CD4-positive, alpha-beta T cell (primary cell): ENCODE measurements at regions of chr11 and their contacts with region 1.

Region 1: GRCh38 chr11:8099291-8099899 is 18.4 kb downstream of the TUB start:
- DNase-seq: peak; percentile 44 to 79 (median 68)
- ATAC-seq: peak; percentile 52
- H3K4me3 ChIP-seq: no peak overlapping the region
- H3K4me3 Mint-ChIP-seq: no peak overlapping the region
- H3K27ac ChIP-seq: no peak overlapping the region
- H3K27ac Mint-ChIP-seq: no peak overlapping the region
- H3K4me1 ChIP-seq: no peaks in the 10 kb centered on the region
- H3K4me1 Mint-ChIP-seq: no peaks in the 10 kb centered on the region
- H3K27me3 ChIP-seq: no peaks in the 10 kb centered on the region
- H3K27me3 Mint-ChIP-seq: no peaks in the 10 kb centered on the region
- CTCF ChIP-seq: peak; percentile 67

Region 2: GRCh38 chr11:7826316-7826715 is 273.1 kb before region 1 on chr11:
- CTCF ChIA-PET with region 1: no interaction called
- POLR2A ChIA-PET with region 1: no interaction called
- intact Hi-C with region 1: no loop called
- DNase-seq: no peak
- ATAC-seq: no peak
- H3K4me3 ChIP-seq: no peak overlapping the region
- H3K4me3 Mint-ChIP-seq: no peak overlapping the region
- H3K27ac ChIP-seq: no peak overlapping the region
- H3K27ac Mint-ChIP-seq: no peak overlapping the region
- H3K4me1 ChIP-seq: no peaks in the 10 kb centered on the region
- H3K4me1 Mint-ChIP-seq: no peaks in the 10 kb centered on the region
- H3K27me3 ChIP-seq: no peaks in the 10 kb centered on the region
- H3K27me3 Mint-ChIP-seq: no peaks in the 10 kb centered on the region
- CTCF ChIP-seq: no peak

Region 3: GRCh38 chr11:7892840-7893254 is 206.5 kb before region 1 on chr11:
- CTCF ChIA-PET with region 1: interaction called, 4 read pairs
- POLR2A ChIA-PET with region 1: no interaction called
- intact Hi-C with region 1: loop called in 1 of 2 experiments (anchors 2 kb)
- DNase-seq: peak in 4 of 14 experiments; percentile 3 to 57 (median 50)
- ATAC-seq: peak; percentile 67
- H3K4me3 ChIP-seq: no peak overlapping the region
- H3K4me3 Mint-ChIP-seq: no peak overlapping the region
- H3K27ac ChIP-seq: no peak overlapping the region
- H3K27ac Mint-ChIP-seq: no peak overlapping the region
- H3K4me1 ChIP-seq: no peaks in the 10 kb centered on the region
- H3K4me1 Mint-ChIP-seq: peaks cover 7% of the 10 kb centered on the region
- H3K27me3 ChIP-seq: no peaks in the 10 kb centered on the region
- H3K27me3 Mint-ChIP-seq: peaks cover 4% of the 10 kb centered on the region
- CTCF ChIP-seq: peak; percentile 73

Region 4: GRCh38 chr11:8033305-8034105 is 65.9 kb before region 1 on chr11:
- CTCF ChIA-PET with region 1: interaction called, 28 read pairs
- POLR2A ChIA-PET with region 1: no interaction called
- intact Hi-C with region 1: loop called (anchors 1 to 2 kb)
- DNase-seq: peak; percentile 12 to 75 (median 32)
- ATAC-seq: peak; percentile 84
- H3K4me3 ChIP-seq: no peak overlapping the region
- H3K4me3 Mint-ChIP-seq: no peak overlapping the region
- H3K27ac ChIP-seq: no peak overlapping the region
- H3K27ac Mint-ChIP-seq: no peak overlapping the region
- H3K4me1 ChIP-seq: peaks cover 8% of the 10 kb centered on the region
- H3K4me1 Mint-ChIP-seq: peaks cover 7% of the 10 kb centered on the region
- H3K27me3 ChIP-seq: peaks cover 5 to 6% of the 10 kb centered on the region in 2 experiments
- H3K27me3 Mint-ChIP-seq: peaks cover 51% of the 10 kb centered on the region
- CTCF ChIP-seq: peak; percentile 79

Region 5: DNA sequence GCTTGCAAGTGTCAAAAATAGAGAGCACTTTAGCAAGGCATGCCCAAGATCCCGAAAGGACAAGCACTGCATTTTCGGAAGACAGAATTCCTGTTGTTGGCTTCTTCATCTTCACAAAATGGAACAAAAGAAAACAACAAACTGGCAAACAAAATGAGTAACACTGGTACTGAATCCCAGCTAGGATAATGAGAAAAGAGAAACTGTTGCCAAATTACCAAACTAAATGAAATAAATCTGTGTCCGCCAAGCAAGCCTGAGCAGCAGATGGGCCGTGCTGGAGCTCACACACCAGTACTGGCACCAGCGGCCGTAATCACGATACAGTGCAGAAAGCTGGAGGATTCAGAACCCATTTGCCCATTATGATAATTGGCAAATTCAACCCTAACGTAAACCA is 12.2 kb after region 1 on chr11:
- CTCF ChIA-PET with region 1: no interaction called
- POLR2A ChIA-PET with region 1: no interaction called
- intact Hi-C with region 1: no loop called
- DNase-seq: no peak
- ATAC-seq: no peak
- H3K4me3 ChIP-seq: no peak overlapping the region
- H3K4me3 Mint-ChIP-seq: no peak overlapping the region
- H3K27ac ChIP-seq: no peak overlapping the region
- H3K27ac Mint-ChIP-seq: no peak overlapping the region
- H3K4me1 ChIP-seq: no peaks in the 10 kb centered on the region
- H3K4me1 Mint-ChIP-seq: no peaks in the 10 kb centered on the region
- H3K27me3 ChIP-seq: no peaks in the 10 kb centered on the region
- H3K27me3 Mint-ChIP-seq: no peaks in the 10 kb centered on the region
- CTCF ChIP-seq: no peak